WTC11 (cell line): ENCODE measurements at regions of chr12 and their contacts with region 1.

Region 1: DNA sequence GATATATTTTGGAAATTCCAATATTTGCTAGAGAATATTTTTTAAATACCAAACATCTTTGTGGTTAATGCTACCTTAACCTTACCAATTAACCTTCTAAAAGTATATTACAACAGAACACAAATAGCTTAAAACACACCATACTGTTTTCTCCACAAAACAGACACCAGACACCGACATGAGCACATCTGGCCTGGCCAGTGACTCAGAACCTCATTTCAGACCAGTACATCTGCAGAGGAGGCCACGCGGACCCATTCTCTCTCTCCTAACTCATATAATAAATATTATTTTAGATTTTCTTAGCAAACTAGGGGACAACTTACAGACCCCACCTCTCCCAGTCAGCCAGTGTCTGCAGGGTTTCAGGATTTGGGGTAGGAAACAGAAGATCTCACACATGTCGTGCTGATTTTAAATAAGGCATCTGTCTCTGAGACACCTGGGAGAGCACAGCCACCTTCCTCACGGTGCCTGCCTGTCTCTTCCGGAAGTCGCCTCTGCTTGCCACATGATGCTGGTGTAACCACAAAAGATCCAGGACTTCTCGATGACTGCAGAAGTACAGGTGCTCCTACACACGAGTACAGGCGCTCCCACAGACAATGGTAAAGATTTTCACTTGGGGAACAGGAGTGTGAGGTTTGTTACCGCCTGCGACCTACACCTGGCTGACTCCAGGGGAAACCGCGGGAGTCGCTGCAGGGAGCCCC is 9.7 kb upstream of the ANKLE2 start:
- DNase-seq: no peak
- ATAC-seq: no peak
- H3K4me3 Mint-ChIP-seq: no peak overlapping the region
- H3K27ac Mint-ChIP-seq: no peak overlapping the region
- H3K4me1 Mint-ChIP-seq: peaks cover 5% of the 10 kb centered on the region
- H3K27me3 Mint-ChIP-seq: no peaks in the 10 kb centered on the region
- CTCF ChIP-seq: no peak

Region 2: GRCh38 chr12:132746613-132747012 is 24.7 kb before region 1 on chr12:
- CTCF ChIA-PET with region 1: interaction called, 11 read pairs
- POLR2A ChIA-PET with region 1: no interaction called
- DNase-seq: no peak
- ATAC-seq: no peak
- H3K4me3 Mint-ChIP-seq: no peak overlapping the region
- H3K27ac Mint-ChIP-seq: no peak overlapping the region
- H3K4me1 Mint-ChIP-seq: no peaks in the 10 kb centered on the region
- H3K27me3 Mint-ChIP-seq: no peaks in the 10 kb centered on the region
- CTCF ChIP-seq: no peak

Region 3: GRCh38 chr12:132754160-132754932 is 16.9 kb before region 1 on chr12:
- CTCF ChIA-PET with region 1: interaction called, 12 read pairs
- POLR2A ChIA-PET with region 1: no interaction called
- DNase-seq: no peak
- ATAC-seq: peak; percentile 59
- H3K4me3 Mint-ChIP-seq: no peak overlapping the region
- H3K27ac Mint-ChIP-seq: no peak overlapping the region
- H3K4me1 Mint-ChIP-seq: no peaks in the 10 kb centered on the region
- H3K27me3 Mint-ChIP-seq: no peaks in the 10 kb centered on the region
- CTCF ChIP-seq: no peak